Posterior cingulate gyrus (tissue), 11 donors: ENCODE measurements at regions of chr17 and their contacts with region 1.

Region 1: GRCh38 chr17:74379495-74380085 is 12.3 kb downstream of the GPR142 start:
- DNase-seq: peak; percentile 79 to 98 (median 94)

Region 2: DNA sequence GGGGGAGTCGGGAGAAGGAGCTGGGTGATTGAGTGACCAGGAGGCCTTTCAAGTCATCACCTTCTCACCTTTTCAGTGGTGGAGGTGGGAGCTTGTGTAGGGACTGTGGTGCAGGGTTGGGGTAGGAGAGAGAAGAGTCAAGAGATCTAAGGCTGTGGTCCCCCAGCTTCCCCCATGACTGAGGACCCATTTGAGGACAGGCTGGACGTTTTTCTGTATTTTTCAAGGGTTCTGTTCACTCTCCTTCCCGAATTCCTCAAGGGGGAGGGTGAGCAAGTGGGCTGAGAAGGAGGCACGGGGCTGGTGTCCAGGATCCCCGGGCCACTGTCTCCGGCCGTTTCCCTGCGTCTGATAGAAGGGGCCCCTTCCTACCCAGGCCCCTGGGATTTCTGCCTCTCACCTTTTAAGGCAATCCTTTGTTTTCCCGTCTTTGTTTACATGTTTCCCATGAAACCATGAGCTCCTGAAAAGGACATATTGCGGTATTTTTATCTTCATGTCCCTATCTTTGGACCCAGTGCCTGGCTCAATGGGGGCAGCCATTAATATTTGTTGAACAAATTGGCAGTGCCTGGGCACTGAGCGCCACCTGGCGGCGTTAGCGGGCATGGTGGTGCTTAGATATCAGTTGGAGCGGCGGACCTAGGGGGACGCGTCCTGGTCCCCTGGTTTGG is 77.7 kb after region 1 on chr17:
- intact Hi-C with region 1: loop called (anchors 1 kb)
- DNase-seq: peak; percentile 52 to 97 (median 84)